ENCODE measurements at regions of chr9 and their contacts with region 1.

Region 1: DNA sequence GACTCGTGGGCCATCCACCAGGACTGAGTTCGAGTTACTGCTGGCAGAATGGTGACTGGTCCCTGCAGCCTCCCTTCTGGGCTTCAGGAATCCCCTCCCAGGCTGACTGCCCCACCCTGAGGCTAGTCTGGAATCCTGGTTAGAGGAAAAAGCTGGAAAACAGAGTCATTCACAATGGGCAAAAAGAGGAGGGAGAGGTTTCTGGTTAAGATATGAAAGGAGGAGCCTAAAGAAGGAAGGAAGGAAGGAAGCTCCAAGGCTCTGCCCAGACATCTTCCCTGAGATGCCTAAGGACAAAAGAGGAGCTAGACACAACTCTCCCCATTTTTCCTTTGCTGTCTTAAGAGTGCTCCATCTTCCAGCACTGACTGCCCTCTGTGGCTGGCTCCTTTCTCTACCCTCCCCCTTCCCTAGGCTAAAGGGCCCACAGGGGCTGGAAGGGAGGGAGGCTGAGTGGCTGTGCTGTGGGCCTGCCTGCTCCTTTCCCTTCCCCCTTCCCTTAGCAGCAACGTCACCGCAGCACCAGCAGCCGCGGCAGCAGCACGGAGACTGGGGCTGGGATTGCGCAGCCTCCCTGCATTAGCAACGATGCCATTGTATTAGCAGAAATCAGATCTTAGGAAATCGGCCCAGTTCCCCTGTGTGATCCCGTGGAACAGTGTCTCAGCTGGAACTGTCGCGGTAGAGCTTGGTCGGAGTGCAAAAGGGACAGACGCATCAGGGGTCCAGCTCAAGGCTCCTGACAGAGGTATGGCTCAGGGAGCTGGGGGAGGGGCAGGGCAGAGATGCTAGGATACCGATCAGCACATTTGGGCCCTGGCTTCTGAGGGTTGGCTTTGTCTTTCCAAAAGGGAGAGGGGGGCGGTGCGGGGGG is 48.7 kb downstream of the RUSC2 start:
- DNase-seq: peak; percentile 87
- ATAC-seq: peak; percentile 87

Region 2: GRCh38 chr9:34591248-34591916 is 947.2 kb before region 1 on chr9:
- intact Hi-C with region 1: no loop called
- DNase-seq: peak; percentile 93
- ATAC-seq: peak; percentile 74

Region 3: GRCh38 chr9:34876096-34876495 is 662.5 kb before region 1 on chr9:
- intact Hi-C with region 1: no loop called
- DNase-seq: no peak
- ATAC-seq: no peak

Region 4: DNA sequence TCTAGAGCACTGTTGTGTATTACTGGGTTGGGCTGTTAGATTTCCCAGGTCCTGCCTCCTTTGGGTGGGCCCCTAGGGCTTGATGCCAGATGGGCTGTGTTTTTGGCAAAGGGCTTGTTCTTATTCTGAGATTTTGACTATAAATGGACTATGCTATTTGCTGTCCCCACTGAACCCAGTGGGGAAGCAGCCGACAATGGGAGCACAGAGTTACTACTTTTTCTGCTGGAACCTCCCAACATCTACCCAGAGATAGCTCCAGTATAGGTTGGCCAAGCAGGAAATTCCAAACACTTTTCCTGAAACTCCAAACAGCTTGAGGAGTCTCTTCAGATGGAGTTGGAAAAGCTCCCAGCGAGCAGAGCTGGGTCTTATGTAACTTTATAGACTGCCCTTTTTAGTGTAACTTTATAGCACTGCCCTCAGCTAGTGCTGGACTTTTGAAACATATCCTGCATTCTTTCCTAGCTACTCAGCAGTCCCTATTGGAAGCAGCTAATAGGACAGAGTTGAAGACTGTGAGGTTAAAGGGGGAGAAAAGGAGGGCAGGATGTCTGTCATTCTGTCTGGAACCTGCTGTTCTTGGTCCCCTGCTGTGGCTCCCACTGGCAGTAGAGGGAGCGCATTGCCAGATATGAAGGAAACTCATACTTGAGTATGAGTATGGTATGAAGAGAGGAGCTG is 27.7 kb before region 1 on chr9:
- intact Hi-C with region 1: loop called (anchors 1 kb)
- DNase-seq: peak; percentile 83
- ATAC-seq: peak; percentile 95

Region 5: GRCh38 chr9:35521706-35522105 is 16.9 kb before region 1 on chr9:
- intact Hi-C with region 1: loop called (anchors 2 kb)
- DNase-seq: no peak
- ATAC-seq: peak; percentile 56